Head of caudate nucleus (tissue), 42 donors: ENCODE measurements at regions of chr13 and their contacts with region 1.

Region 1: GRCh38 chr13:97221989-97222700 is at the start of gene MBNL2:
- DNase-seq: peak; percentile 89 to 99 (median 98)

Region 2: DNA sequence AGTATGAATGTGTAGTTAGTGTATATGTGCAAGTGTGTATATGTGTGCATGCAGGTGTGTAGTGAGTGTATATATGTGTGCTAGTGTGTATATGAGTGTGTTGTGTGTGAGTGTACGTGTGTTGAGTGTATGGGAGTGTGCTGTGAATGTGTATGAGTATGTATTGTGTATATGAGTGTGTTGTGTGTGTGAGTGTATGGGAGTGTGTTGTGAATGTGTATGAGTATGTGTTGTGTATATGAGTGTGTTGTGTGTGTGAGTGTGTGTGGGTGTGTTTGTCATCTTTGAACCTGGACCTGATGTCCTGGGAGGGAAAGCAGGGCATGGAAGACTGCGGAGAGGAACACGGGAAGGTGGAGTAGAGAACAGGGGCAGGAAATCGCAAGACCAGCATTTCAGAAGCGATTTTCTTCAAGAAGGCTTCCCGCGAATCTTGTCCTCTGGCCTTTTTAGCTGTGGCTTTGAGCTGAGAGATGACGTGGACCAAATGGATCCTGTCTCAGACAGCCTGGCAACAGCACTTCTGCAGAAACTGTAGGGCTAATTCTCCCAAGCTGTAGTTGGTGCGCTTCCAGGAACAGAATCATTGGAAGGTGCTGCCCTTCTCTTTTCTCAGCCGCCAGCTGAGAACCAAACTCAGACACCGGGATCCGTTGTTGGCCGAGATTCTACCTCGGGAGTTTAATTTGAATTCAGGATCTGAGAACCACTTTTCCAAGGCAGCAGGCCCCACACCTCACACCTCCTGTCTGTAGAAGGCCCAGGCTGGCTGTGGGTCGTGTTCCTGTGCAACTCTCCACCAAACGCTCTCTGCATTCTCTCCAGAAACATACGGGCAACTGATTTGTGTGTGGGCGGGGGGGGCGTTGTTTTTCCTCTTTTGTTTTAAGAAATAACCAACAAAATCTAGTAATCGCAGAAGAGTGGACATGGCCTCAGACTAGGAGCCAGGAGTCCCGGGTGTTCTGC is 117.2 kb after region 1 on chr13:
- intact Hi-C with region 1: loop called (anchors 5 kb)
- DNase-seq: peak in 20 of 42 donors; percentile 10 to 77 (median 44)

Region 3: GRCh38 chr13:97432917-97433726 is 211.0 kb after region 1 on chr13:
- intact Hi-C with region 1: loop called (anchors 5 kb)
- DNase-seq: peak; percentile 97 to 100 (median 99)